MCF 10A (cell line): ENCODE measurements at regions of chr20 and their contacts with region 1.

Region 1: GRCh38 chr20:7859356-7859802 is 80.9 kb downstream of the HAO1 start:
- DNase-seq: peak; percentile 79
- H3K4me3 Mint-ChIP-seq: no peak overlapping the region
- H3K27ac Mint-ChIP-seq: peak overlapping the region; percentile 23
- H3K4me1 Mint-ChIP-seq: peaks cover 33% of the 10 kb centered on the region
- H3K27me3 Mint-ChIP-seq: no peaks in the 10 kb centered on the region
- CTCF ChIP-seq: peak; percentile 50

Region 2: DNA sequence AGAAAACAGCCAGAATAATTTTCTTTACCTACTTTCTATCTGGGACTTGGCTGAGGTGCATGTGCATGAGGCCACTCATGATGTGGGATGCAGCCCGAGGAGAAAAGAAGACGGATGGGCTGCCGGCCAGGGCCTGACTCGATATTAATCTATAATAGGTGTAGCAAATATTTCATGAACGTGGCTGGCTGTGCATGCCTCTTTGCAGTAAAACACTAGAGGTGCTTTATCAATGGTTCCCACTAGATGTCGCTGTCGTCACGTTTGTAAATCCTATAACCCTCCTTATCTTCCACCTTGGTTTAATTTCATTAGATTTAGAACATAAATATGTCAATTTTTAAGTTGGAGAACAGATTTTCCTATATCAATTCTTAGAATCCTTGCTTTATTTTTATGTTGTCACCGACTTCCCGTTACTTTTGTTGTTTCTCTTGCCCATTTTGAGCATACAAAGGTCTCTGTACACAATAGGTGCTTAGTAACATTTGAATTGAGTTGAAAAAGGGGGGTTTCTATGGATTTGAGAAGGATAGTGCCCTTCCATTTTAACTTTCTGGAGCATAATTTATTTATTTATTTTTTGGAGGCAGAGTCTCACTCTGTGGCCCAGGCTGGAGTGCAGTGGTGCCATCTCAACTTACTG is 1716.9 kb before region 1 on chr20:
- CTCF ChIA-PET with region 1: no interaction called
- POLR2A ChIA-PET with region 1: interaction called, 4 read pairs
- intact Hi-C with region 1: loop called (anchors 10 kb)
- DNase-seq: peak; percentile 71
- H3K4me3 Mint-ChIP-seq: no peak overlapping the region
- H3K27ac Mint-ChIP-seq: no peak overlapping the region
- H3K4me1 Mint-ChIP-seq: no peaks in the 10 kb centered on the region
- H3K27me3 Mint-ChIP-seq: peaks cover 1% of the 10 kb centered on the region
- CTCF ChIP-seq: peak; percentile 79

Region 3: GRCh38 chr20:7094438-7094997 is 764.9 kb before region 1 on chr20:
- CTCF ChIA-PET with region 1: no interaction called
- POLR2A ChIA-PET with region 1: no interaction called
- intact Hi-C with region 1: loop called (anchors 5 kb)
- DNase-seq: peak; percentile 65
- H3K4me3 Mint-ChIP-seq: no peak overlapping the region
- H3K27ac Mint-ChIP-seq: no peak overlapping the region
- H3K4me1 Mint-ChIP-seq: no peaks in the 10 kb centered on the region
- H3K27me3 Mint-ChIP-seq: no peaks in the 10 kb centered on the region
- CTCF ChIP-seq: peak; percentile 63

Region 4: GRCh38 chr20:7272512-7272911 is 586.9 kb before region 1 on chr20:
- CTCF ChIA-PET with region 1: no interaction called
- POLR2A ChIA-PET with region 1: no interaction called
- intact Hi-C with region 1: loop called (anchors 5 kb)
- DNase-seq: peak; percentile 18
- H3K4me3 Mint-ChIP-seq: no peak overlapping the region
- H3K27ac Mint-ChIP-seq: no peak overlapping the region
- H3K4me1 Mint-ChIP-seq: no peaks in the 10 kb centered on the region
- H3K27me3 Mint-ChIP-seq: no peaks in the 10 kb centered on the region
- CTCF ChIP-seq: peak; percentile 35

Region 5: DNA sequence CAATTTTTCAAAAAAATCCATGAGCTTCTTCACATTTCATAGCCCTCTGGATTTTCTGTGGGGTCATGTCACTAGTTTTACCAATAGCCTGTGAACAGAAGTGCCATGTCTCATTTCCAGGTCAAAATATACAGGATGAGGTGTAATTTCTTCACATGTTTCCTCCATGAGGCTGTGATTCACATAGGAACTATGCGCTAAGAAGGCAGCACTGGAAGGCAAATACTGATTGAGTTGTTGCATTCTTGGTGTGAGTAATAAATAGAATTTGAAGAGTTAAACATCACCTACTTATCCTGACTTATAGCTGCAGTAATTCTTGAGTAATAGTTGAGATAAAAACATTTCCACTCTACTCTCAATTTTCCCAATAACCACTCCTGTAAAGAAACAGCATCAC is 361.4 kb before region 1 on chr20:
- CTCF ChIA-PET with region 1: no interaction called
- POLR2A ChIA-PET with region 1: no interaction called
- intact Hi-C with region 1: loop called (anchors 1 kb)
- DNase-seq: peak; percentile 86
- H3K4me3 Mint-ChIP-seq: no peak overlapping the region
- H3K27ac Mint-ChIP-seq: peak overlapping the region; percentile 44
- H3K4me1 Mint-ChIP-seq: peaks cover 21% of the 10 kb centered on the region
- H3K27me3 Mint-ChIP-seq: no peaks in the 10 kb centered on the region
- CTCF ChIP-seq: no peak

Region 6: GRCh38 chr20:8049310-8049709 is 189.9 kb after region 1 on chr20:
- CTCF ChIA-PET with region 1: no interaction called
- POLR2A ChIA-PET with region 1: no interaction called
- intact Hi-C with region 1: no loop called
- DNase-seq: no peak
- H3K4me3 Mint-ChIP-seq: no peak overlapping the region
- H3K27ac Mint-ChIP-seq: no peak overlapping the region
- H3K4me1 Mint-ChIP-seq: no peaks in the 10 kb centered on the region
- H3K27me3 Mint-ChIP-seq: no peaks in the 10 kb centered on the region
- CTCF ChIP-seq: no peak